ENCODE measurements at regions of chr1 and their contacts with region 1.

Region 1: GRCh38 chr1:160108888-160109662 is 6.5 kb upstream of the ATP1A2 start:
- DNase-seq: no peak
- H3K4me3 ChIP-seq: no peak overlapping the region
- CTCF ChIP-seq: peak; percentile 35

Region 2: GRCh38 chr1:159935719-159936272 is 173.3 kb before region 1 on chr1:
- CTCF ChIA-PET with region 1: no interaction called
- POLR2A ChIA-PET with region 1: no interaction called
- DNase-seq: no peak
- H3K4me3 ChIP-seq: no peak overlapping the region
- CTCF ChIP-seq: no peak

Region 3: DNA sequence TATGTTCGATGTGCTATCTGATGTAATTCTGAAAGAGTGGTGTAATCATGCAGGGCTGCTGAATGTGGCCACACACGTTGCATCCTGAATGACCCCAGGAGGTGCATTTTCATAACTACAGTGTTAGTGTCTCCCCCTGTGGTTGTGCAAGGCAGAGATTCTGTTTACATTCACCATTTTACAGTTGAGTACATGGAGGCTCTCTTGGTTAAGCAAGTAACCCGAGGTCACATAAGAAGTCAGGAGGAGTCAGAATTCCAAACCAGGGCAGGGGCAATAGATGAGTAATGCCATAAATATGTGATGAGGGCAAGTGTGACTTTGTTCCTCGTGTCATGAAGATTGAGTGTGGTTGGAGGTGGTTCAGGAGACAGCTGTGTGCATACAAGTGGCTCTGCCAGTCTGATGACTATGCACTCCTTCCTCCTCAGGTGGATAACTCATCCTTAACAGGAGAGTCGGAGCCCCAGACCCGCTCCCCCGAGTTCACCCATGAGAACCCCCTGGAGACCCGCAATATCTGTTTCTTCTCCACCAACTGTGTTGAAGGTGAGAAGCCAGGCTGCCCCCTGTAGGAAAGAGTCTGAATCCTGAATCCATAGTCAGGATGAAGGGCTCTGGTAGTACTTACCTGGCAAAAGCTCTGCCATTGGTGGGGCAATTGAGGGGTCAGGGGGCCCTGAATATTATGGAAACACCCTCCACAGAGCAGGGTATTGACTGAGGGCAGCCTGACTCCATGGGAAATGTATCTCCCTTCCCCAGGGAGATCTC is 15.8 kb after region 1 on chr1:
- CTCF ChIA-PET with region 1: interaction called, 16 read pairs
- POLR2A ChIA-PET with region 1: no interaction called
- DNase-seq: peak; percentile 45
- H3K4me3 ChIP-seq: no peak overlapping the region
- CTCF ChIP-seq: peak; percentile 20

Region 4: DNA sequence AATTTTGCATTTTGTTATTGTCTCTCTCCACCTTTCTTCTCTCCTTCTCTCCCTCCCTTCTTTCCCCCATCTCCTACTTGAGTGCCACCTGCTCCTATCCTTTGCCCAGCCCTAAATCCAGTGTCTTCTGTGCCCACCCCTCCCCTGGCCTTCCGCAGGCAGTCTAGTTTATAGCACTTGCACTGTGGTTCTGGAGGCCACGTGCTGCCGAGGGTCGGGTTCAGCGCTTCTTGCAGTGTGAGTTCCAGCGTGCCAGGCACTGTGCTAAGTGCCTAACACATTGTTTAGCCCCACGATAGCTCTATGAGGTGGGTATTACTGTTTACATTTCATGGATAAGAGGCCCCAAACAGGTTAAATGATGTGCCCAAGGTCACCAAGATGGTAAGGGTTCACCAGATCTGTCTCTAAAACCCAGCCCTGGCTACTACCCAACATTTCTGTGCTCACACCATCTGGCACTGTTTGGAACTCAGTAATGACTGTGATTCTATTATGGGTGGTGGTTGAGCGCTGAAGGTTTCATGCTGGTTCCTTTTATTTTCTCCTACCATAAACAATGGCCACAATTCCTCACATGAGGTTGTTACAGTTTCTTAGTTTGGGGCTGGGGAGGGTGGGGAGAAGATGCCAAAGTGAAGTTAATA is 28.3 kb after region 1 on chr1:
- CTCF ChIA-PET with region 1: no interaction called
- POLR2A ChIA-PET with region 1: no interaction called
- DNase-seq: no peak
- H3K4me3 ChIP-seq: no peak overlapping the region
- CTCF ChIP-seq: no peak

Region 5: GRCh38 chr1:160726498-160727315 is 617.6 kb after region 1 on chr1:
- CTCF ChIA-PET with region 1: no interaction called
- POLR2A ChIA-PET with region 1: no interaction called
- DNase-seq: peak; percentile 4
- H3K4me3 ChIP-seq: no peak overlapping the region
- CTCF ChIP-seq: peak; percentile 33